ENCODE measurements at regions of chr15 and their contacts with region 1.

Region 1: DNA sequence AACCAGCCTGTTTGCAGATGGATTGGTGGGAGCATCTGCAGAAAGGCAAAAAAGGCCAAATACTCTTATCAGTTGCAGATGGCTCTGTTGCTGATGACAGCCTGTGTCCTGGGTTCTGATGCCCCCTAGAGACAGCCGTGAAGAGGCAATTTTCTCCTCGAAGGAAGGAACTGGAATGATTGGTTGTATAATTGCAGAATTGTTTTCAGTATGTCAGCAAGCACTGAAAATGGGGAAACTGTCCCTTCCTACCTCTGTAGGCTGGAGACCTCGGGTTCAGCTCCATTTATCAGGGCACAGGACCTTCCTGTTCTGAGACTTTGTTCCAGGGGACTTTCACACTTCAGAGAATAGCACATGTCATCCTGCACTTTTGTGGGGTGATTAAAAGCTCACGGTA is 103.0 kb downstream of the PGPEP1L start:
- DNase-seq: peak; percentile 84
- H3K4me3 ChIP-seq: no peak overlapping the region
- H3K27ac ChIP-seq: peak overlapping the region; percentile 48 to 73; a peak in 3 of 4 replicates
- H3K4me1 ChIP-seq: peaks cover 24 to 28% of the 10 kb centered on the region in 2 experiments; a peak in 3 of 4 replicates
- H3K27me3 ChIP-seq: no peaks in the 10 kb centered on the region
- CTCF ChIP-seq: peak; percentile 75
- EP300 ChIP-seq: no peak; a peak in 1 of 4 replicates
- RAD21 ChIP-seq: peak; percentile 93

Region 2: DNA sequence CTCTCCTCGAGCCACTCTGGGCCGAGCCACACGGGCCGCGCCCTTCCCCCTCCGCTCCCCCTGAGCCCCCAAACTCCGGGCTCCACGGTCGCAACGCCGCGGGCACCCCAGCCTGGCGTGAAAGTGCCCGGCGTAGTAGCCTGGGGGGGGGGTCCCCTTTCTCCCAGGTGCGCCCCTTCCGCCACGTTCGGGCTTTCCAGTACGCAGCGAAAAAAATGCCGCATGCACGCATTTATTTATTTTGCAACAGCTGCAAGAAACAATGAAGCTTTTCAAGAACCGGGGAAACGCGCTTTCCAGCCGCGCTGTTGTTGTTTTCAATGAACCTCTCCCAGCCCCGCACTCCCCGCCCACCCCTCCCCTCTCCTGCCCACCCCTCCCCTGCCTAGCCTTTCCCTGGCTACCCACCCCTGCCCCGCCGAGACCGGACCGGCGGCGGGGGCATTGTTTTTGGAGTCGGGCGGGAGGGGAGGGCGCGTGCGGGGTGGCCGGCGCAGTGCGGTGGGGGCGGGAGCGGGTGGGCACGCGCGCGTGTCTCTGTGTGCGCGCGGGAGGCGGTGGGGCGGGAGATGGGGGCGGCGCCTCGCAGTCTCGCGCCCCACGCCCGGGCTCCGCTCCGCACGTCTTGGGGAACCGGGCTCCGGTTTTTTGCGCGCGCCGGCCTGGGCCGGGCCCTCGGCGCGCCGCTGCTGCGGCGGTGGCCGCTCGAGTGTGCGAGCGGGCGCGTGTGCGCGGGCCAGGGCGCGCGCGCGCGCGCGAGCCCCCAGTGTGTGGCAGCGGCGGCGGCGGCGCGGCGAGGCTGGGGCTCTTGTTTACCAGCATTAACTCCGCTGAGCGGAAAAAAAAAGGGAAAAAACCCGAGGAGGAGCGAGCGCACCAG is 256.5 kb before region 1 on chr15 and contains the start of gene IGF1R:
- CTCF ChIA-PET with region 1: interaction called, 22 read pairs
- POLR2A ChIA-PET with region 1: no interaction called
- DNase-seq: peak; percentile 94
- H3K4me3 ChIP-seq: peak within 1 kb of the TSS; percentile 78 to 92
- H3K27ac ChIP-seq: peak within 1 kb of the TSS; percentile 76 to 89
- H3K4me1 ChIP-seq: peaks cover 4 to 5% of the 10 kb centered on the region in 2 experiments; a peak in 3 of 4 replicates
- H3K27me3 ChIP-seq: peaks cover 9% of the 10 kb centered on the region; the same call in 1 of the 2 replicates
- CTCF ChIP-seq: no peak
- EP300 ChIP-seq: no peak
- RAD21 ChIP-seq: no peak
- polyA plus RNA-seq, gene IGF1R: 6.4 and 9.5 TPM in 2 replicates

Region 3: GRCh38 chr15:98779463-98780071 is 125.0 kb before region 1 on chr15:
- CTCF ChIA-PET with region 1: interaction called, 33 read pairs
- POLR2A ChIA-PET with region 1: no interaction called
- DNase-seq: peak; percentile 76
- H3K4me3 ChIP-seq: peak overlapping the region in 1 of 2 experiments; percentile 25; a peak in 1 of 4 replicates
- H3K27ac ChIP-seq: no peak overlapping the region
- H3K4me1 ChIP-seq: peaks cover 0 to 5% of the 10 kb centered on the region in 2 experiments; a peak in 1 of 4 replicates
- H3K27me3 ChIP-seq: no peaks in the 10 kb centered on the region
- CTCF ChIP-seq: peak; percentile 94
- EP300 ChIP-seq: no peak
- RAD21 ChIP-seq: peak; percentile 84

Region 4: DNA sequence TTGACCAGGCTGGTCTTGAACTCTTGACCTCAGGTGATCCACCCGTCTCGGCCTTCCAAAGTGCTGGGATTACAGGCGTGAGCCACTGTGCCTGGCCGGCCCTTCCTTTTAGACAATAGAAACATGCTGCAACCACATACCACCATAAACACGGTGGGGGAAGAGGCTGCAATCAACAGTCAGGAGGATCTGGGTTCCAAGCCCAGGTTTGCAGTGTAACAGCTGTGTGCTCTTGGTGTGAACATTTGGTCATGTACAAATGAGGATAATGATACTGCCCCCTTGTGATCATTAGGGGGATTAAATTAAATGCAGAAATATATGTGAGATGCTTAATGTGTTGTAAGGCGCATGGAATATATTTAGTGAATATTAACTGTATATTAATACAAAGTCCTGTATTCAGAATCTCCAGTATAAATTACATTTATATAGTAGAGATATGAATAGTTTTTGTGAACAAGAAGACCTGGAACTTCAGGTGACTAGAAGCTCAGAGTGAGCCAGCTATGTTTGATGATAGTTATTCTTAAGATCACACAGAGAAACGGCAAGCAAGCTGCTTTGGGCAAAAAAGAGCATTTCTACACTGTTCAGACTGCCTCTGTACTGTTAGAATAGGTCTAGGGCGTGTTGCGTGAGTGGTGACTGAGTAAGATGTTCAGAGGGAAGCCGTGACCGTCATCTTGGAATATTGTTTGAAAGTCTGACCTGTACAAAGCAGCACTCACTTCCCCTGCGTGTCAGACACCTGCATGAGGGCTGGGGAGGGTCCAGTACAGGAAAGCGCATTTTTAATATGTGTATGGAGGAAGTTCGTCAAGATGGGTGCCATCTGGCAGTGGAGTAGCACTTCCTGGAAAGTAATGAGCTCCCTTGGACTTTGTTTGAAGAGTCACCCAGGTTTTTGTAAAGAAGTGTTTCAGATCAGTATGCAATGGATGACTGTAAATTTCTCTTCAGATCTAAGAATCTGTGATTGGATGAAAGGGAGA is 22.7 kb before region 1 on chr15:
- CTCF ChIA-PET with region 1: interaction called, 21 read pairs
- POLR2A ChIA-PET with region 1: no interaction called
- DNase-seq: peak; percentile 67
- H3K4me3 ChIP-seq: peak overlapping the region in 1 of 2 experiments; percentile 36; a peak in 1 of 4 replicates
- H3K27ac ChIP-seq: no peak overlapping the region
- H3K4me1 ChIP-seq: peaks cover 3 to 13% of the 10 kb centered on the region in 2 experiments; a peak in 2 of 4 replicates
- H3K27me3 ChIP-seq: no peaks in the 10 kb centered on the region
- CTCF ChIP-seq: peak; percentile 75
- EP300 ChIP-seq: no peak
- RAD21 ChIP-seq: peak; percentile 68

Region 5: GRCh38 chr15:98914626-98915025 is 10.1 kb after region 1 on chr15:
- CTCF ChIA-PET with region 1: interaction called, 19 read pairs
- POLR2A ChIA-PET with region 1: no interaction called
- DNase-seq: no peak
- H3K4me3 ChIP-seq: no peak overlapping the region
- H3K27ac ChIP-seq: peak overlapping the region; percentile 63 to 65
- H3K4me1 ChIP-seq: peaks cover 9 to 14% of the 10 kb centered on the region in 2 experiments
- H3K27me3 ChIP-seq: no peaks in the 10 kb centered on the region
- CTCF ChIP-seq: no peak
- EP300 ChIP-seq: peak in 1 of 2 experiments; percentile 48; a peak in 1 of 4 replicates
- RAD21 ChIP-seq: no peak

Region 6: GRCh38 chr15:99029341-99030144 is 125.0 kb after region 1 on chr15:
- CTCF ChIA-PET with region 1: no interaction called
- POLR2A ChIA-PET with region 1: no interaction called
- DNase-seq: no peak
- H3K4me3 ChIP-seq: no peak overlapping the region
- H3K27ac ChIP-seq: no peak overlapping the region
- H3K4me1 ChIP-seq: peaks cover 0 to 5% of the 10 kb centered on the region in 2 experiments; a peak in 1 of 4 replicates
- H3K27me3 ChIP-seq: no peaks in the 10 kb centered on the region; the same call in 1 of the 2 replicates
- CTCF ChIP-seq: no peak
- EP300 ChIP-seq: no peak
- RAD21 ChIP-seq: no peak